Colonic mucosa (tissue), 4 donors: ENCODE measurements at regions of chr6 and their contacts with region 1.

Region 1: DNA sequence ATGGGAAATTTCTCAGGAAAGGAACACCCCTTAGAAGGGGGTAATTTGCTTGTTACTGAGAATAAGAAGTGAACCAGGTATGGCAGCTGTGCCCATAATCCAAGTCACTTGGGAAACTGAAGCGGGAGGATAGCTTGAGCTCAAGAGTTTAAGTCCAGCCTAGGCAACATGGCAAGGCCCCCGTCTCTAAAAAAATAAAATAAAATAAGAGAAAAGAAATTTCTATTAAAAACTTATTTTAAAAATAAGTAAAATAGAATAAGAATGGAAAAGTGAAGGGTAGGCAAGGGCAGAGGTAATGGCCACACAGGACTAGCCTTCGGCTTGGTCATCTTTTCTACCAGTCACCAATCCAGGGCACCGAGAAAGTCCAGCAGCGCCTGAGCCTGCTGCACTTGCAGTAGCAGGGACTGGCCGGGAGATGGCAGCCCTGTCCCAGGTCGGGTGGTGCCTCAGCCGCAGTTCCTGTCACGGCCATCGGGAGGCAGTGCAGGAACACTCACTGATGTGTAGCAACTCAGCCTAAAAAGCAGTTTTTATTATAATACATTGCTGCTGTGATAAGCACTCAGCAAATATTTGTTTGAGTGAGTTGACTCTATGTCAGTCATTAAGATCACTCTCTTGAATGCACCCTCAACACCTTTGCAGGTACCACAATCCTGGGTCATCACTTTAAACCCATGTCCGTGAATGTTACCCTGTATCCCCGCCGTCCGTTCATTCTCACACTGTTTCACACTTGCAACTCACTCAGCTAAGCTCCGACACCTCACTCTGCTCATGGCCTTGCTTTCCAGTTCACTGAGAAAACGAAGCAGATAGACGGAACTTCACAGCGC is 23.2 kb upstream of the GCM1 start:
- DNase-seq: peak; percentile 91
- H3K4me3 ChIP-seq: no peak overlapping the region
- H3K27ac ChIP-seq: no peak overlapping the region
- H3K4me1 ChIP-seq: no peaks in the 10 kb centered on the region
- H3K27me3 ChIP-seq: no peaks in the 10 kb centered on the region
- CTCF ChIP-seq: peak; percentile 100

Region 2: DNA sequence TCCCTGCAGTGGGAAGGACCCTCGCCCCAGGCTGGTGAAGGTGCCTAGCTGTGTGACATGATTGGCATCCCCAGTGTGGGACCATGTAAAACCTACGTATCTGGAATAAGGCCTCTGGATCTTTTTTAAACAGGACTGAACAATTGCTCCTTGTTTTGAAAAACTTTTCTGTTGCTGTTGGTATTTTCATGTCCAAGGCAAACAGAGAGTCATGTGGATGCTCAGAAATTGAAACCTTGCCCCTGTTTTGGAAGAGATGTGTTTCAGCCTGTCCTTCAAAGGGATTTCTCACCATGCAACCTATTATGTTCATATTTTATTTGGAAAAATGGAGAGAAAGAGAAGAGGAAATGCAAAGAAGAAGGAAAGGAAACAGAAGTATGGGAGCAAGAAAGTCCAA is 1446.7 kb before region 1 on chr6:
- intact Hi-C with region 1: no loop called
- DNase-seq: no peak
- H3K4me3 ChIP-seq: no peak overlapping the region
- H3K27ac ChIP-seq: no peak overlapping the region
- H3K4me1 ChIP-seq: no peaks in the 10 kb centered on the region
- H3K27me3 ChIP-seq: no peaks in the 10 kb centered on the region
- CTCF ChIP-seq: no peak

Region 3: DNA sequence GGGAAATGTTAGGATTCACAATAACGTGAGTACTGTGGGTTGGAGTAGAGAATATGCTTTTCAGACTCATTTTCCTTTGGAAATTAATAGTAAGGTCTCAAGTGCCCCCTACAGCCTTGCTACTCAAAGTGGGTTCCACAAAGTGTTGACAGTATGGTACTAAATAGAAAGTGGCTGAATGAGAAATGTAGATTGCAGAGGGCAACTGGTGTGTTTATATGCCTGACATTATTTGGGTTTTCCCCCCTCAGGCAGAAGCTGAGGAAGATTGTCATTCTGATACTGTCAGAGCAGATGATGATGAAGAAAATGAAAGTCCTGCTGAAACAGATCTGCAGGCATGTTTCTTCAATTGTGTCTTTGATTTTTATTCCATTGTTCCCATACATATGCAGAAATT is 101.0 kb before region 1 on chr6:
- intact Hi-C with region 1: no loop called
- DNase-seq: no peak
- H3K4me3 ChIP-seq: no peak overlapping the region
- H3K27ac ChIP-seq: no peak overlapping the region
- H3K4me1 ChIP-seq: peaks cover 7% of the 10 kb centered on the region
- H3K27me3 ChIP-seq: no peaks in the 10 kb centered on the region
- CTCF ChIP-seq: no peak

Region 4: DNA sequence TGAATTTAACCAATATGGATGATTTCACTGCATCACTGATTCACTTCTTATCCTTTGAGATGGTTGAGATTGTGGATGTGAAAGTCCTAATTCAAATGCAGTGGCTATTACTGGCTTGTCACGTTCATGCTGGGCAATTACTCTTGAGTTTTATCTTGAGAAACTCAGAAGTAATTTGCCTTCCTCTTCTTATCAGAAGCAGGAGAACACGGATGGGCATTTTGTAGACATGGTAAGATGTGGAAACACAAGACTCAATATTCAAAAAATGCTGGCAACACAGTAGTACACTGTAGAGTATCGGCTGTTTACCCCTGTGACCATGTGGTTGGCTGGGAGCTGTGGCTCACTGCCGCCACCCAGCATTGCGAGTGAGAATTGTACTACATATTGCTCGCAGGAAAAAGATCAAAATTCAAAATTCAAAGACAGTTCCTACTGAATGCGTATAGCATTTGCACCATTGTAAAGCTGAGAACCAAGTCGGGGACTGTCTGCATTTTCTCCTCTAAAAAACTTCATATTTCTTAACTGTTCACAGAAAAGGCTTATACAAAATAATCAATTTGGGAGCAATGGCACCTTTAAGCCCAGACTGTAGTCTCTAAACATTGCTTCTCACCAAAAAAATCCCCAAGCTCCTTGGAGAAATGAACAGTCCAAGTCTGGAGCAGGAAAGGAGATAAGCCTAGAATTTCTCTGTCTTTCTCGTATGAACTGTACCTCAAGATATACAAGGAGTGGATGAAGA is 238.9 kb after region 1 on chr6:
- intact Hi-C with region 1: loop called (anchors 2 kb)
- DNase-seq: peak; percentile 22
- H3K4me3 ChIP-seq: no peak overlapping the region
- H3K27ac ChIP-seq: no peak overlapping the region
- H3K4me1 ChIP-seq: no peaks in the 10 kb centered on the region
- H3K27me3 ChIP-seq: no peaks in the 10 kb centered on the region
- CTCF ChIP-seq: peak; percentile 51

Region 5: DNA sequence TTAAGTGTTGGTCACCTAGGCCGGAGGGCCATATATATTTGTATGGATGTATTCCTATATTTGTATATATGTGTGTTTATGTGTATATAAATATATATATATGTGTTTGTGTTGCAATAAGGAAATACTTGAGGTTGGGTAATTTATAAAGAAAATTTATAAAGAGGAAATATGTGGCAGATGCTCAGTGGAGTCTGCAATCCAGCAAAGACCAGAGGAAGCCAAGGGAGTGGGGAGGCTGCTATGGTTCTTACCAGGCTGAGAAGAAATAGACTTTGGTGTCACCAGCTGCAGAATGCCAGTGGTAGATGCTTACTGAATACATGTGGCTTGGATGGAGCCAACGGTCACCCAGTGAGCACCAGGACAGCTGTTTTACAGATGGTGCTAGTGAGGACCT is 274.3 kb after region 1 on chr6:
- intact Hi-C with region 1: no loop called
- DNase-seq: no peak
- H3K4me3 ChIP-seq: no peak overlapping the region
- H3K27ac ChIP-seq: no peak overlapping the region
- H3K4me1 ChIP-seq: no peaks in the 10 kb centered on the region
- H3K27me3 ChIP-seq: no peaks in the 10 kb centered on the region
- CTCF ChIP-seq: no peak

Region 6: DNA sequence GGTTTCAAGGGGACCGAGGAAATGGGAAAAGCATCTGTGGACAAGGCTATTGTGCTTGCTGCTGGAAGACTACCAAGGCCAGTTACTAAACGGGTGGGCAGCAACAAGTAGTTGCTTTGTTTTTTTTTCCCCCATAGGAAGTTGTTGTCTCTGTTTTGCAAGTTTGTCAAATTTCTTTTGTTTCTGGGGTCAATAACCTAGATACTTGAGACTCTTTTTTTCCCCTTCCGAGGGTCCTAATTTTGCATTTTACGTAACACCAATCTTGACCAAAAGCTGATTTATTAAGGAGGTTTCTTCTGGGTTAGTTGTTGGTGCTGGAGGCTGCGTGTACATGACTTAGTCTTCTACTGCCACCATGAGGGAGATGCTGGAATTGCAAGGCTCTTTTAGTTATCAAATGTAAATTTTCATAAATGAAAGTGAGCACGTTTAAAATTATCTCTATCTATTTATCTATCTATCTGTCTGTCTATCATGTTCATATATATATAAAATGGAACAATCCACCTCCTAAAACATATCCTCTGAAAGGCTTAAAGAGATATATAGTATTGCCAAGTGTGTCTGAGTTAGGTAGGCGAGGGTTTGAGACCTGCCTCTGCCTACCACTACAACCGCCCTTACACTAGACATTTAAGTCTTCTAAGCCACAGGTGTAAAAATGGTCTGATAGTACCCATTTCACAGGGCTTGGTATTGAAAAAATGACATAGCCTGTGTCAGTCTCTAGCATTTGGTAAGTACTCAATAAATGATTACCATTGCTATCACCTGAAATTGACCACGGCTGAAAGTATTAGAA is 312.9 kb after region 1 on chr6:
- intact Hi-C with region 1: loop called (anchors 2 kb)
- DNase-seq: peak; percentile 83
- H3K4me3 ChIP-seq: no peak overlapping the region
- H3K27ac ChIP-seq: no peak overlapping the region
- H3K4me1 ChIP-seq: no peaks in the 10 kb centered on the region
- H3K27me3 ChIP-seq: no peaks in the 10 kb centered on the region
- CTCF ChIP-seq: peak; percentile 98

Region 7: GRCh38 chr6:53679446-53679933 is 507.7 kb after region 1 on chr6:
- intact Hi-C with region 1: loop called (anchors 10 kb)
- DNase-seq: no peak
- H3K4me3 ChIP-seq: no peak overlapping the region
- H3K27ac ChIP-seq: no peak overlapping the region
- H3K4me1 ChIP-seq: no peaks in the 10 kb centered on the region
- H3K27me3 ChIP-seq: no peaks in the 10 kb centered on the region
- CTCF ChIP-seq: peak; percentile 18

Region 8: GRCh38 chr6:53725791-53726431 is 554.1 kb after region 1 on chr6:
- intact Hi-C with region 1: loop called (anchors 10 kb)
- DNase-seq: peak; percentile 76
- H3K4me3 ChIP-seq: no peak overlapping the region
- H3K27ac ChIP-seq: no peak overlapping the region
- H3K4me1 ChIP-seq: no peaks in the 10 kb centered on the region
- H3K27me3 ChIP-seq: no peaks in the 10 kb centered on the region
- CTCF ChIP-seq: peak; percentile 98